Mammary epithelial cell (primary cell): ENCODE measurements at regions of chr1 and their contacts with region 1.

Region 1: GRCh38 chr1:14804626-14805025 is 206.1 kb downstream of the KAZN start:
- DNase-seq: no peak
- H3K4me3 ChIP-seq: no peak overlapping the region
- H3K27ac ChIP-seq: no peak overlapping the region
- H3K4me1 ChIP-seq: no peaks in the 10 kb centered on the region
- H3K27me3 ChIP-seq: no peaks in the 10 kb centered on the region
- CTCF ChIP-seq: peak; percentile 35 to 71

Region 2: GRCh38 chr1:14567056-14567455 is 237.6 kb before region 1 on chr1:
- CTCF ChIA-PET with region 1: no interaction called
- dilution Hi-C with region 1: no loop called
- in situ Hi-C with region 1: no loop called
- intact Hi-C with region 1: loop called (anchors 2 kb)
- DNase-seq: peak; percentile 12
- H3K4me3 ChIP-seq: no peak overlapping the region
- H3K27ac ChIP-seq: no peak overlapping the region
- H3K4me1 ChIP-seq: no peaks in the 10 kb centered on the region
- H3K27me3 ChIP-seq: no peaks in the 10 kb centered on the region
- CTCF ChIP-seq: peak; percentile 25 to 45

Region 3: DNA sequence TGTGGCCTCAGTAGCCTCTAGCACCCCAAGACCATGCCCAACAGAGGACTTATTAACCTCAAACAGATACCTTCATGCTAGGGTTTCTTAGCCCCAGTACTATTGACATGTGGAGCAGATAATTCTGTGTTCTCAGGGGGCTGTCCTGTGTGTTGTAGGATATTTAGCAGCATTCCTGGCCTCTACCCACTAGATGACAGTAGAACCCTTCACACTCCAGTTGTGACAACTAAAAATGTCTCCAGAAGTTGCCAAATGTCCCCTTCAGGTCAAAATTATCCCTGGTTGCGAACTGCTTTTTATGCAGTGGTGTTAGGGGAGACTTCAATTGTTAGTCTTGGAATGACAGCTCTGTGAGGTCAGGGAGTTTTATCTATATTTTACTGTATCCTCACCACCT is 198.0 kb before region 1 on chr1:
- CTCF ChIA-PET with region 1: no interaction called
- dilution Hi-C with region 1: no loop called
- in situ Hi-C with region 1: no loop called
- intact Hi-C with region 1: loop called (anchors 1 kb)
- DNase-seq: no peak
- H3K4me3 ChIP-seq: no peak overlapping the region
- H3K27ac ChIP-seq: no peak overlapping the region
- H3K4me1 ChIP-seq: no peaks in the 10 kb centered on the region
- H3K27me3 ChIP-seq: no peaks in the 10 kb centered on the region
- CTCF ChIP-seq: peak; percentile 49 to 89